Endothelial cell of umbilical vein (primary cell): ENCODE measurements at regions of chr3 and their contacts with region 1.

Region 1: DNA sequence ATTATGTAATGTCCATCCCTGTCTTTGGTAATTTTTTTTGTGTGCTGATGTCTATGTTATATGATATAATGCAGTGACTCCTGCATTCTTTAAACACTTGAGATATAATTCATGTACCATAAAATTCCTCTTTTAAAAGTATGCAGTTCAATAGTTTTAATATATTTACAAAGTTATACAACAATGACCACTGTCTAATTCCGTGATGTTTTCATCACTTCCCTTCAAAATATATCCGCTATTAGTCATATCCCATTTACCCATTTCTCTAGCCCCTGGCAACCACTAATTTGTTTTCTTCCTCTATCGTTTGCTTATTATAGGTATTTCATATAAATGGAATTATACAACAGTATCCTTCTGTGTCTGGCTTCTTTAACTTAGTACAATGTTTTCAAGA is 64.9 kb upstream of the SUCLG2 start:
- DNase-seq: peak; percentile 55
- H3K4me3 ChIP-seq: no peak overlapping the region
- H3K27ac ChIP-seq: peak overlapping the region; percentile 73
- H3K4me1 ChIP-seq: peaks cover 13% of the 10 kb centered on the region
- H3K27me3 ChIP-seq: no peaks in the 10 kb centered on the region
- CTCF ChIP-seq: no peak
- POLR2A ChIP-seq: no peak

Region 2: GRCh38 chr3:67531250-67532106 is 187.9 kb before region 1 on chr3:
- CTCF ChIA-PET with region 1: no interaction called
- POLR2A ChIA-PET with region 1: no interaction called
- dilution Hi-C with region 1: no loop called
- intact Hi-C with region 1: loop called (anchors 2 kb)
- DNase-seq: peak; percentile 34
- H3K4me3 ChIP-seq: no peak overlapping the region
- H3K27ac ChIP-seq: no peak overlapping the region
- H3K4me1 ChIP-seq: peaks cover 31% of the 10 kb centered on the region
- H3K27me3 ChIP-seq: no peaks in the 10 kb centered on the region
- CTCF ChIP-seq: no peak
- POLR2A ChIP-seq: no peak

Region 3: GRCh38 chr3:67610458-67610857 is 108.9 kb before region 1 on chr3:
- CTCF ChIA-PET with region 1: no interaction called
- POLR2A ChIA-PET with region 1: no interaction called
- dilution Hi-C with region 1: no loop called
- intact Hi-C with region 1: loop called (anchors 1 kb)
- DNase-seq: peak; percentile 79
- H3K4me3 ChIP-seq: no peak overlapping the region
- H3K27ac ChIP-seq: peak overlapping the region; percentile 60
- H3K4me1 ChIP-seq: peaks cover 20% of the 10 kb centered on the region
- H3K27me3 ChIP-seq: no peaks in the 10 kb centered on the region
- CTCF ChIP-seq: no peak
- POLR2A ChIP-seq: no peak

Region 4: DNA sequence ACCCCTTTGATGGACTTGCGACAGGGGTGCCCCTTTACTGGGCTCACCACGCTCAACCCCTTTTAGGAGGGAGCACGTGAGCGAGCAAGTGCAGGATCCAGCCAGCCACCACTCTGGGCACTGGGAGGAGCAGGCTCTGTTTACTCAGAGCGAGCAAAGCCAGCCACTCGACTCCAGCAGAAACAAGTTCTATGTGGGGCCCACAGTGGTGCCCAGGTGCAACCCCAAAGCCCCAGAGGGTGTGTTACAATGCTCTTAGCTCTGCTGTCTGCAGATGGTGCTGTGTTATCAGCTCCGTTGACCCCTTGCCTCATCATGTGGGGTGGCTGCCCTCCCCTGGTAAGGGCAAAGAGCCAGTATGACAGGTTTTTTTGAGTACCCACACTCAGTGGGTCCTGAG is 55.3 kb after region 1 on chr3:
- CTCF ChIA-PET with region 1: no interaction called
- POLR2A ChIA-PET with region 1: no interaction called
- dilution Hi-C with region 1: no loop called
- intact Hi-C with region 1: no loop called
- DNase-seq: no peak
- H3K4me3 ChIP-seq: no peak overlapping the region
- H3K27ac ChIP-seq: no peak overlapping the region
- H3K4me1 ChIP-seq: no peaks in the 10 kb centered on the region
- H3K27me3 ChIP-seq: no peaks in the 10 kb centered on the region
- CTCF ChIP-seq: no peak
- POLR2A ChIP-seq: no peak